ENCODE measurements at regions of chr1 and their contacts with region 1.

Region 1: DNA sequence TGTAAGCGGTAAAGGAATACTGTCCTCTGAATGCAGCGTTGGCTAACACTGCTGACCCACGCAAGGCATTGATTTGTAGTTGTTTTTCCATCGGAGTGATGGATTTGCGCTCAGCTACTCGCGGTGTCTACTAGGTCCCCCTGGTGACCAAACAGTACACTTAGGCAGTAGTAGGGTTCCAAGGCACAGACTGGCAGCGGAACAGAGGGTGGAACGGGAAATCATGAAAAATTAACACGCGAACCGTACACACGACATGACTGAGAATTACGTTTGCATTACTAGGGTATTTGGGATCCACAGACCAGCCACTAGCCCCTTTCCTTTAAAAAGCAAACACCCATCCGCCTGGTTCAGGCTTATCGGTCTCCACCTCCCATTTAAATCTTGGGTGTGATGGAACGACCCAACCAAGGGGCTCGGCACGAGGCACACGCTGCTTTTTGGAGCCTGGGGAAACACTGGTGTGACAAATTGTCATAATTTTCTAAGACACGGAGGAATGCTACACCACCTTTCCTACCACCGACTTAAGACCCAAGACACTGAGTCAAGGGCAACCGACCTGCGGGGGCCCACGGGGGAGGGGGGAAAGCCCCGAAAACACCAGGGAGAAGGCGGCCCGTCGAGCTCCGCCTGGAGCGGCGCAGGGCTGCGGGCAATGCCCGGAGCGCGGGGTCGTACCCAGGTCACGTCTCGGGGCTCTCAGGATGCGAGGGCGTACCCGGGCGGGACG is 699 bp downstream of the DIPK1A start:
- DNase-seq: no peak
- ATAC-seq: peak; percentile 40
- H3K4me3 Mint-ChIP-seq: peak overlapping the region; percentile 93
- H3K27ac Mint-ChIP-seq: peak overlapping the region; percentile 97
- H3K4me1 Mint-ChIP-seq: peaks cover 34% of the 10 kb centered on the region
- H3K27me3 Mint-ChIP-seq: no peaks in the 10 kb centered on the region

Region 2: GRCh38 chr1:92858564-92859399 is 101.8 kb before region 1 on chr1:
- POLR2A ChIA-PET with region 1: interaction called, 36 read pairs
- DNase-seq: no peak
- ATAC-seq: peak; percentile 77
- H3K4me3 Mint-ChIP-seq: peak overlapping the region; percentile 59
- H3K27ac Mint-ChIP-seq: peak overlapping the region; percentile 62
- H3K4me1 Mint-ChIP-seq: peaks cover 24% of the 10 kb centered on the region
- H3K27me3 Mint-ChIP-seq: no peaks in the 10 kb centered on the region

Region 3: GRCh38 chr1:92975551-92976232 is 15.1 kb after region 1 on chr1:
- POLR2A ChIA-PET with region 1: interaction called, 39 read pairs
- DNase-seq: no peak
- ATAC-seq: peak; percentile 18
- H3K4me3 Mint-ChIP-seq: peak overlapping the region; percentile 3
- H3K27ac Mint-ChIP-seq: peak overlapping the region; percentile 55
- H3K4me1 Mint-ChIP-seq: peaks cover 44% of the 10 kb centered on the region
- H3K27me3 Mint-ChIP-seq: no peaks in the 10 kb centered on the region

Region 4: DNA sequence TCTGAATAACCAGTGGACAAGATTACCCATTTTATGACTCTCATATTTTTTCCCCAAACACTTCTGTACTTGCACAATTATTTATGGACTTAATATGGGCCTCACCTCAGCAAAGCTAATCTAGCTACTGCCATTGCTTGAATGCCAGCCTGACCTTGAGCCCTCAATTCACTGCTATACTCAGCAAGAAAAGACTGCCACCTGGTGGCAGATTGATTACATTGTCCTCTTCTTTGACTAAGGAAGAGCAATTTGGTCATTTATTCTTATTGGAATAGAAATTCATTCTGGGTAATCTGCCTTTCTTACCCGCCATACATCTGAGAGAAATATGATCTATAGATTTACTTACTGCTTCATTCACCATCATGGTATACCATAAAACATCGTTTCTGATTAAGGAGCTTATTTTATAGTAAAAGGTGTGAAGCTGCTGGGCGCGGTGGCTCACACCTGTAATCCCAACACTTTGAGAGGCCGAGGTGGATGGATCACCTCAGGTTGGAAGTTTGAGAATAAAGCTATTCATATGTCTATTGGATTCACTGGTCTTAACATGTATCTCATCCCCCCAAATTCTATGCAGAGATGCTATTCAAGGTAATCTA is 33.6 kb after region 1 on chr1:
- POLR2A ChIA-PET with region 1: interaction called, 91 read pairs
- DNase-seq: no peak
- ATAC-seq: peak; percentile 71
- H3K4me3 Mint-ChIP-seq: no peak overlapping the region
- H3K27ac Mint-ChIP-seq: no peak overlapping the region
- H3K4me1 Mint-ChIP-seq: peaks cover 45% of the 10 kb centered on the region
- H3K27me3 Mint-ChIP-seq: no peaks in the 10 kb centered on the region

Region 5: GRCh38 chr1:93078986-93079654 is 118.6 kb after region 1 on chr1 and contains the start of gene MTF2:
- POLR2A ChIA-PET with region 1: interaction called, 12 read pairs
- DNase-seq: peak; percentile 94
- ATAC-seq: peak; percentile 92
- H3K4me3 Mint-ChIP-seq: peak within 1 kb of the TSS; percentile 99
- H3K27ac Mint-ChIP-seq: peak within 1 kb of the TSS; percentile 97
- H3K4me1 Mint-ChIP-seq: peaks cover 28% of the 10 kb centered on the region
- H3K27me3 Mint-ChIP-seq: no peaks in the 10 kb centered on the region
- total RNA-seq, gene MTF2: 61.6 to 66.8 TPM

Measured in activated naive CD8-positive, alpha-beta T cell treated with anti-CD3 and anti-CD28 coated beads, Interleukin-2, amount 10 ng/mL, durations not matched to agents 7 days and 5 days (primary cell).